Sciatic nerve (tissue), 2 donors: ENCODE measurements at regions of chr5 and their contacts with region 1.

Region 1: GRCh38 chr5:100722657-100723056 is 180.4 kb downstream of the ST8SIA4 start:
- DNase-seq: no peak
- ATAC-seq: no peak

Region 2: GRCh38 chr5:99955962-99956361 is 766.7 kb before region 1 on chr5:
- intact Hi-C with region 1: loop called (anchors 5 kb)
- DNase-seq: peak; percentile 35
- ATAC-seq: no peak

Region 3: GRCh38 chr5:100790170-100790665 is 67.6 kb after region 1 on chr5:
- intact Hi-C with region 1: loop called (anchors 2 kb)
- DNase-seq: no peak
- ATAC-seq: no peak